HEK293T (cell line): ENCODE measurements at regions of chr20 and their contacts with region 1.

Region 1: DNA sequence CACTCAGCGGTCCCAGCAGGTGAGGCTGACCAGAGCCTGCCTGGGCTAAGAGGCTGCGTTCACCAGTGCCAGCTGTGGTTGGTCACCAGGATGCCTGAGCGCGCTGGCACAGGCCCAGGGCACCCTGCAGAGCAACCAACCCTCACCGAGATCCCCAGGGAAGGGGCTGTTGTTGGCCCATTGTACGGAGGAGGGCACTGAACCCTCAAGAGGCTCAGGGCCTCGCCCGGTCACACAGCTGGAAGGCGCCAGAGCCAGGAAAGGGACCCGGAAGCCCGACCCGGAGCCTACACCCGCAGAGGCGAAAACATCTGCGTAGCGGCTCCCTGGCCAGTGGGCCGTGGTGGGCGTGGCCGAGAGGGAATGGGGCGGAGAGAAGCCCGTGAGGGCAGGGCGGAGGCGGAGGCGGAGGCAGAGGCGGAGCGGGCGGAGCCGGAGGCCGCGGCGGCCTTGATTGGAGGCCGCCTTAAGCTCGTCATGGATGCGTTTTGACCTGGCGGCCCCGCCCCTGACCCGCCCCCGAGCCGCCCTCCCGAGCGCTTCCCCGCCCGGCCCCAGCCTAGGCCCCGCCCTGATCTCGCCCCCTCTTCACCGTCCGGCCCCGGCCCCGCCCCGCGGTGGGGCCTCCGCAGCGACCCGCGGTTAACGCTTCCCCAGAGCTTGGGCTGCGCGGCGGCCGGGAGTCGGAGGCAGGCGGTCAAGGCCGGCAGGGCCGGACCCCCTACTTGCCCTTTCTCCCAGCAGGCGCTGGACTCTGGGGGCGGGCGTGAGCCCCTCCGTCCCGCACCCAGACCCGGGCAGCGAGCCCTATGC is 2.2 kb upstream of the MRGBP start:
- DNase-seq: peak; percentile 94

Region 2: DNA sequence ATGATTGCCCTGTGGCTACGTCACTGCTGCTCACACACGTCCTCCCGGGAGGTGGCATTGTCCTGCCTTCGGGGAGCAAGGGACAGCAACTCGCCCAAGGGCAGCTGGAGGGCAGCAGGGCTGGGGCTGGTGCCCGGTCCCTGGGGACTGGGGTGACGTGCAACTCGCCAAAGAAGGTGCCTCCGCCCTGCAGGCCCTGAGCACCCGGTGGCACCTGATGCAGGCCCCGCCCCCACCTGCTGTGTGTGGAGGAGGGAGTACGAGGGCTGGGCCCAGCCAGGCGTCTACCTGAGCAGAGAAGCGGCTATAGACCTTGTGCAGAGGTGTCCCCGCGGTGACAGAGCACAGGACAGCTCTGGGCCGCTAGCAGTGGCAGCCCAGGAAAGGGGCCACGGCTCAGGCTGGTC is 216.6 kb before region 1 on chr20:
- CTCF ChIA-PET with region 1: no interaction called
- POLR2A ChIA-PET with region 1: no interaction called
- DNase-seq: no peak

Region 3: DNA sequence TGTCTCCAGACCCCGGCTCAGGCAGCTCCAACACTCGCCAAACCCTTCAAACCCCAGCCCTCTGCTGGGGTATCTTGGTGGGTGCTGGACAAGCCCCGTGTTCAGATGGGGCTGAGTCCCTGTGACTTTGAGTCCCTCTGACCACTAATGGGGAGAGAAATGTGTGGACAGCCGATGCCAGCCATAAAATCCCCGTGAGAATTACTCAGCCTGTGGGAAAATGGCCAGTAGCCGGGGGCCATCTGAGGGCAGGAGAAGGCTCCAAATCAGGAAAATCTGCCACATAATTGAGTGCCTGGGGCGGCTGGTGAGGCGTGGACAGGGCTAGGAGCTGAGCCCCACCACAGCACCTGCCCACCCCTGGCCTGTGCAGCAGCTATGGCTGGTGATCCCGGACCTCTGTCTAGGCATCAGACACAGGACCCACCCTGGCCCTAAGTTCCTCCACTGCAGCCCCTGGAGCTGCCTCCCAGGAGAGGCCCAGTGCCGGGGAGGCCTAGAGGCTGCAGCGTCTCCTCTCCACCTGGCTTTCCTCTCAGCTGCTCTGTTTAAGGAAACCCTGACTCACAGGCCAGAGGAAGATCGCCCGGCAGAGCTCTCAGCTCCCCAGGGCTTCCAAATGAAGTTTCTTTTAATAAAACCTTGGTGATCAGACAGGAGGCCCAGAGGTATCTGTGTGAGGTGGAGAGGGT is 205.5 kb before region 1 on chr20:
- CTCF ChIA-PET with region 1: interaction called, 10 read pairs
- POLR2A ChIA-PET with region 1: no interaction called
- DNase-seq: no peak

Region 4: GRCh38 chr20:62808211-62808865 is 14.2 kb after region 1 on chr20:
- CTCF ChIA-PET with region 1: interaction called, 3 read pairs
- POLR2A ChIA-PET with region 1: interaction called, 25 read pairs
- DNase-seq: peak; percentile 78

Region 5: DNA sequence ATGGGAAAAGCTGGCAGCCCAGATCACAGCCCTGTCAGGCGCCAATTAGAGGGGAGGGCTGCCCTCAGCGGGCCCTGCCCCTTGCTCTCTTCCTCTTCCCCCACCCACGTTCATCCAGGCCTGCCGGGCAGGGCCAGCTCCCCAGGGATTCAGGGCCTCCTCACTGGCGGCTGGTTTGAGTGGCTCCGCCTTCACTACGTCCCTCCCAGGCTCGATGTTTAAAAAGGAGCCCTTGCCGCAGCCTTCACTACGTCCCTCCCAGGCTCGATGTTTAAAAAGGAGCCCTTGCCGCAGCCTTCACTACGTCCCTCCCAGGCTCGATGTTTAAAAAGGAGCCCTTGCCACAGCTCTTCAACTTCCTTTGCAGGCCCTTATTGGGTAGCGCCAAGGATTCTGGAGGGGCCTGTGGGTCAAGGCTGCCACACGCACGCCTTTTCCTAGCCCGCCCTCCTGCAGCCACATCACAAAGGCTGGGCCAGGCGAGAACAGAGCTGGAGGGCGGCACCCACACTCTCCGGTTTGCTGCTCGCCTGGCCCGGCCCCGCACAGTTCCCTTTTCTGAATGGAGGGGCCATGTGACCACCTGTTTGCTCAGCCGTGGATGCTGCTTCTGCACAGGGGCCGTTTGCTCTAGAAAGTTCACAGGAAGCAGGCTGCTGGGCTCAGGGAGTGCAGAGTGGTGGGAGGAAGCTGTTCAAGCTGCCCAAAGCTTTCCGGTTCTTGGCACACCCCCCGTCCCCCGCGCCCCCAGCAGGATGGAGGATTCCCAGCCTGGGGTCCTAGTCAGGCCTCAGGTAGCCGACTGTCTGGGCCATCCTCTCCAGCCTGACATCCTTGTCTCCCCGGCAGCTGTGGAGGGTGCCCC is 160.0 kb after region 1 on chr20:
- CTCF ChIA-PET with region 1: no interaction called
- POLR2A ChIA-PET with region 1: no interaction called
- DNase-seq: no peak